A549 (cell line): ENCODE measurements at regions of chr17 and their contacts with region 1.

Region 1: DNA sequence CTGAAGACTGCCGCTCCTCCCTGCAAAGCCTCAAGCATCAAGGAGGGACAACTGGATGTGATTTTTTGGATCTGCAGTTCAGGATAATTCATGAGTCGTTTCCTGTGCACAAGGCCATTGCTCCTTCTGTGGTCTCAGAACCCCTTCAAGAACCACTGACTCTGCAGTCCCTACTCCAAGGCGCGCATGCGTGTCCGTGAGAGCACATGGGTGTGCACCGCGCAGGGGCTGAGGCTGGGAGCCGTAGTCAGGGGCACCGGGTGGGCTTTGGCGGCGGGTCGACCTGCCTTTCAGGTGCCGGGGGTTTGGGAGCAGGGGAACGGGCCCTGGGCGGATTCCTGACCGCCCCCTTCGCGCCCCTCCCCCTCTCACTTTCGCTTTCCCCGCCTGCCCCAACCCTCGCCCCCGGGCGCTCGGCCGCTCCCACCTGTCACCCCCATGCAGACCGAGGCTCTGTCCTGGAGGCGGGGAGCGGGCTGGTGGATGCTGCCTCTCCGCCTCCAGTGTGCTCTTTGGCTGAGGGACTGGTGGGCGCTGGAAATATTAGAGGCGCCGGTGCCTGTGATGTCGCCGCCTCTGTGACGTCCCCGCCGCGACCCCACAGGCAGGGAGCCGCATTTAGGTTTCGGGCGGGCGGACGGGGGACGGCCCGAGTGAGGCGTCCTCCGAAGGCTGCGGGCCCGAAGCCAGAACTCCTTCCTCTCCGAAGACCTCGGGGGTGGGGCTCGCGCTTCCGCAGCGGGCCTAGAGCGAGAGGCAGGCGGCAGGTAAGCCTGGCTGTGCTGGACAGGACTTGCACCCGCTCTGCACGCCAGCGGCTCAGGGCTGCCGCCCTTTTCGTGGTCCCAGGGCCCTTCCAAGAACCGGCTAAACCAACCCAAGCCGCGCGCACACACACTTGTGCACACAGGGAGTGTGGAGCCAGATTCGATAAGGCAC is at the start of gene SPATA32:
- DNase-seq: no peak
- ATAC-seq: no peak
- H3K4me3 ChIP-seq: no peak within 1 kb of the TSS
- H3K27ac ChIP-seq: peak within 1 kb of the TSS in 1 of 2 experiments; percentile 54; a peak in 3 of 6 replicates
- H3K4me1 ChIP-seq: peaks cover 46% of the 10 kb centered on the region
- CTCF ChIP-seq: no peak
- EP300 ChIP-seq: no peak
- POLR2A ChIP-seq: no peak
- RAD21 ChIP-seq: no peak
- polyA plus RNA-seq, gene SPATA32: 0.05 and 0.08 TPM in 2 replicates

Region 2: GRCh38 chr17:45247429-45248131 is 14.3 kb before region 1 on chr17:
- CTCF ChIA-PET with region 1: interaction called, 42 read pairs
- POLR2A ChIA-PET with region 1: interaction called, 7 read pairs
- DNase-seq: peak; percentile 99 to 100
- ATAC-seq: peak; percentile 79 to 91
- H3K4me3 ChIP-seq: peak overlapping the region; percentile 89
- H3K27ac ChIP-seq: peak overlapping the region; percentile 93 to 96
- H3K4me1 ChIP-seq: peaks cover 49% of the 10 kb centered on the region
- CTCF ChIP-seq: no peak
- EP300 ChIP-seq: peak; percentile 78 to 91; a peak in 3 of 5 replicates
- POLR2A ChIP-seq: peak; percentile 70
- RAD21 ChIP-seq: no peak; a peak in 1 of 5 replicates

Region 3: DNA sequence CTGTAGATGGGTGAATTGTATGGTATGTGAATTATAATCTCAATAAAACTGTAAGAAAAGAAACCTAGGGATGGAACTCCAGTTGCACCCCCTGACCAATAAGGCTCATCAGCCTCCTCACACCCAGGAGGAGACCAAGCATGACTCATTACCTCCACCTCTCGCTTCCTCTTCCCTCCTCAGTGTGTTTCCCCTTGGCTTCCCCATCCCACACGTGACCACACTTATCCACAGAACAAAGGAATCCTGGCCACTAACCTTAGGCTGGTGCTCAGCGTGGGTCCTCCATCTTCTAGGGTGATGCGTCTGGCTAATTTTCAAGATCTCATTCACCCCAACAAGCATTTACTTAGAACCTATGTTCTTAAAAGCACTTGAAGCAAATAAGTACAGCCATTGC is 91.2 kb after region 1 on chr17:
- CTCF ChIA-PET with region 1: no interaction called
- POLR2A ChIA-PET with region 1: no interaction called
- DNase-seq: no peak
- ATAC-seq: no peak
- H3K4me3 ChIP-seq: no peak overlapping the region
- H3K27ac ChIP-seq: no peak overlapping the region
- H3K4me1 ChIP-seq: peaks cover 10% of the 10 kb centered on the region; the same call in 2 of the 3 replicates
- CTCF ChIP-seq: no peak
- EP300 ChIP-seq: no peak
- POLR2A ChIP-seq: no peak
- RAD21 ChIP-seq: no peak